BJ (cell line): ENCODE measurements at regions of chr11 and their contacts with region 1.

Region 1: GRCh38 chr11:116787786-116788486 is at the start of gene ZPR1:
- DNase-seq: peak; percentile 18
- H3K4me3 ChIP-seq: peak within 1 kb of the TSS; percentile 80
- H3K27me3 ChIP-seq: no peaks in the 10 kb centered on the region
- CTCF ChIP-seq: no peak
- polyA plus RNA-seq, gene ZPR1: 51.0 and 63.8 TPM in 2 replicates

Region 2: DNA sequence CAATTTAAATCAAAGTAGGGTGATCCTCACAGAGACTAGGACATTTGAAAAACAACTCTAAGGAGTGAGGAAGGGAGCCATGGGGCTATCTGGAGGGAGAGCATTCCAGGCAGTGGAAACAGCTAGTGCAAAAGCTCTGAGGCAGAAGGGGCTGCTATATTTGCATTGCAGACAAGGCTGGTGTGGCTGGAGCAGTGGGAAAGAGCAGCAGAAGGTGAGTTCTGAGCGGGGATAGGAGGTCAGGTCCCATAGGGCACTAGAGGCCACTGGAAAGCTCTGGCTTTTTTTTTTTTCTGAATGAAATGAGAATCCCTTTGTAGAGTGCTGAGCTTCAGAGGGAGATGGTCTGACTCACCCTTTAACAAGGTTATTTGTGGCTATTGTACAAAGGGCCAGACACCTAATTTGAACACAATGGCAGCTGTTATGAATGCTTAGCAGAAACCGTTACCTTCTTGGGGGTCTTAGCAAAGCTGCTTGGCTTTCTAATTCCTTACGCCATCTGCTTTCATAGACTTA is 306.8 kb before region 1 on chr11:
- CTCF ChIA-PET with region 1: no interaction called
- POLR2A ChIA-PET with region 1: no interaction called
- DNase-seq: no peak
- H3K4me3 ChIP-seq: no peak overlapping the region
- H3K27me3 ChIP-seq: no peaks in the 10 kb centered on the region
- CTCF ChIP-seq: no peak

Region 3: GRCh38 chr11:116808386-116809194 is 20.7 kb after region 1 on chr11:
- CTCF ChIA-PET with region 1: interaction called, 15 read pairs
- POLR2A ChIA-PET with region 1: no interaction called
- DNase-seq: no peak
- H3K4me3 ChIP-seq: no peak overlapping the region
- H3K27me3 ChIP-seq: no peaks in the 10 kb centered on the region
- CTCF ChIP-seq: no peak

Region 4: DNA sequence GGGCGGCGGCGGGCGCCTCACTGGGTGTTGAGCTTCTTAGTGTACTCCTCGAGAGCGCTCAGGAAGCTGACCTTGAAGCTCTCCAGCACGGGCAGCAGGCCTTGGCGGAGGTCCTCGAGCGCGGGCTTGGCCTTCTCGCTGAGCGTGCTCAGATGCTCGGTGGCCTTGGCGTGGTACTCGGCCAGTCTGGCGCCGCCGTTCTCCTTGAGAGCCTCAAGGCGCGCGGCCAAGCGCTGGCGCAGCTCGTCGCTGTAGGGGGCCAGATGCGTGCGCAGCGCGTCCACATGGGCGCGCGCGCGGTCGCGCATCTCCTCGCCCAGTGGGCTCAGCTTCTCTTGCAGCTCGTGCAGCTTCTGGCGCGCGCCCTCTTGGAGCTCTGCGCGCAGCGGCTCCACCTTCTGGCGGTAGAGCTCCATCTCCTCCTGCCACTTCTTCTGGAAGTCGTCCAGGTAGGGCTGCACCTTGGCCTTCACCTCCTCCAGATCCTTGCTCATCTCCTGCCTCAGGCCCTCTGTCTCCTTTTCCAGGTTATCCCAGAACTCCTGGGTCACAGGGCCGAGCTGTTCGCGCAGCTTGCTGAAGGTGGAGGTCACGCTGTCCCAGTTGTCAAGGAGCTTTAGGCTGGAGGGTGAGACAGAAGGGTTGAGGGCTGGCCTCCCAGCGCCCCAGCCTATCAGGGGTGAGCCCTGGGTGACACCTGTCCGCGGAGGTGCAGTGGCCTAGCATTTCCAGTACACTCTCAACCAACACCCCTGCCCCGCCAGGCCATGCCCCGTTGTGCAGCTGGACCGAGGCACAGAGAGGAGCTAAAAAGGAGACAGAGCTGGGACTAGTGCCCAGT is 48.1 kb after region 1 on chr11:
- CTCF ChIA-PET with region 1: interaction called, 34 read pairs
- POLR2A ChIA-PET with region 1: no interaction called
- DNase-seq: peak; percentile 75
- H3K4me3 ChIP-seq: peak overlapping the region; percentile 22; the same call in 1 of the 2 replicates
- H3K27me3 ChIP-seq: no peaks in the 10 kb centered on the region
- CTCF ChIP-seq: peak; percentile 75

Region 5: GRCh38 chr11:116865696-116866095 is 77.8 kb after region 1 on chr11:
- CTCF ChIA-PET with region 1: interaction called, 11 read pairs
- POLR2A ChIA-PET with region 1: no interaction called
- DNase-seq: peak; percentile 85
- H3K4me3 ChIP-seq: no peak overlapping the region
- H3K27me3 ChIP-seq: no peaks in the 10 kb centered on the region
- CTCF ChIP-seq: no peak

Region 6: GRCh38 chr11:117098269-117099232 is 310.6 kb after region 1 on chr11 and contains the start of gene SIK3:
- CTCF ChIA-PET with region 1: interaction called, 165 read pairs
- POLR2A ChIA-PET with region 1: no interaction called
- DNase-seq: peak; percentile 45
- H3K4me3 ChIP-seq: peak within 1 kb of the TSS; percentile 82
- H3K27me3 ChIP-seq: no peaks in the 10 kb centered on the region
- CTCF ChIP-seq: peak; percentile 48
- polyA plus RNA-seq, gene SIK3: 5.3 and 7.3 TPM in 2 replicates

Region 7: DNA sequence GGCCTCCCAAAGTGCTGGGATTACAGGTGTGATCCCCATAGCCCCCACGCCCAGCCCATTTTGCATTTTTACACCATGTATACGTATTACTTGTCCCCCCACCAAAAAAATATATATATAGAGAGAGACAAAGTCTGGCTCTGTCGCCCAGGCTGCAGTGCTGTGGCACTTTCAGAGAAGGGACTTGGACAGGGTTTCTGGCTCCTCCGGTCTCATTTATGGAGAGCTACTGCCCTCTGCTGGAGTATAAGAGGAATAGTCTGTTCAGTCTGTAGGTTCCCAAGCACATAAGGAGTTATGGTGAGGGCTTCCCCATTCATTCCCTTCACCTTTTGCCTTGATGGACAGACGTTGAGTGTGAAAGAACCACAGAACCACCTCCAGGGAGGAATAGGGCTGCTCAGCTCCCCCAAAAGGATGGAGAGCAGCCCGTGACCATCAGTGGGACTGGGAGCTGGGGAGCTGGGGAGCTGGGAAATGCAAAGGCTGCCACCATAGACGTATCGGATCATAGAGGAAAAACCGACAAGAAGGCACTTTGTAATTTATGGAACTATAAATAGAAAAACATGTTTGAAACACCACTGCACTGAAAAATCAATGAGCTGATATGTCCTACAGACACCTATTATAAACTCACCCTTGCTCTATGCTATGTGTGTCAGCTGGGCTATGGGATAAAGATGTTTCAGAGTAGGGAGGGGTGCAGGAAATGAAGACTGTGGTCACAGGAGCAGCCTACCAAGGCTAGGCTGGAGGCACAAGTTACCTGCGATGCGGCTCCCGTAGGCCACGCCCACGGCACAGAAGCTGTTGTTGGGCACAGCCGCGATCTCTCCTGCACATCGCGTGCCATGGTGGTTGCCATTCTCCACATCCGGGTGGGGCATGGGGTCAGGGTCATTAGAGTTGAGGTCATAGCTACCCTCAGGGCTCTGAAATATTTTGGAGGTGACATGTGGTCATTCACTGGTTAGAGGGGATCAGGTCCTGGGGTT is 438.8 kb after region 1 on chr11:
- CTCF ChIA-PET with region 1: interaction called, 16 read pairs
- POLR2A ChIA-PET with region 1: no interaction called
- DNase-seq: no peak
- H3K4me3 ChIP-seq: no peak overlapping the region
- H3K27me3 ChIP-seq: no peaks in the 10 kb centered on the region
- CTCF ChIP-seq: peak; percentile 77